ENCODE measurements at regions of chr15 and their contacts with region 1.

Region 1: DNA sequence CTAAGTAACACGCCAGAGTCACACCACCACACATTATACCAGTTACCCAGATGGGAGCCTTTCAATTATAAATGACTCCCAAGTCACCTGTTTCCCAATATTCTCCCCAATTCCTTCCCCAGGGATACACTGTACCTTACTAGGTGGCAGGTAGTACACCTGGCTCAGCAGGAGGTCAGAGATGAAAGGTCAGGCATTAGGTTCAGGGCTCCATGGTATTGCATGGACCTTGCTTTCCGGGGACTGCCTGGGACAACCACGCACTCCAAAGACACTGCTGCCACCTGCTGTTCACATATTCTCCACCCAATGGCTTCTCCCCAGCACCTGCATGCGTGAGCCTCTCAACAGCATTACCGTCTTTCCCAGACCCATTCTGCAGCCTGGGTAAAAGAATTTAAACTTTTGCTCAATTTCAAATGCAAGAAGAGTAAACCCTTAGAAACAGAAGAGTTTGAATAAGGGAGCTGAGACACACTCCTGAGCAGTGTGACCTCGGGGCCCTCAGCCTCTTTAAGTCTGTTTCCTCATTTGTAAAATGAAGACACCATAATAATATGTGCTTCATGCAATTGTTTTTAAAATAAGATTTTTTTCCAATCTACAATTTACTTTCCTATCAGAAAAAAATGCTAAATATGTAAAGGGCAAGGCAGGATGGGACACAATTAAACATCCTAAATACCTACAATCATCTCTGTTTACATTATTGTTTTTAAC is 28.0 kb upstream of the LACTB start:
- DNase-seq: peak; percentile 16 to 88
- H3K4me3 ChIP-seq: no peak overlapping the region
- H3K27ac ChIP-seq: no peak overlapping the region
- H3K4me1 ChIP-seq: peaks cover 0 to 5% of the 10 kb centered on the region in 2 donors
- H3K27me3 ChIP-seq: no peaks in the 10 kb centered on the region
- CTCF ChIP-seq: peak; percentile 83 to 89 (median 86)

Region 2: DNA sequence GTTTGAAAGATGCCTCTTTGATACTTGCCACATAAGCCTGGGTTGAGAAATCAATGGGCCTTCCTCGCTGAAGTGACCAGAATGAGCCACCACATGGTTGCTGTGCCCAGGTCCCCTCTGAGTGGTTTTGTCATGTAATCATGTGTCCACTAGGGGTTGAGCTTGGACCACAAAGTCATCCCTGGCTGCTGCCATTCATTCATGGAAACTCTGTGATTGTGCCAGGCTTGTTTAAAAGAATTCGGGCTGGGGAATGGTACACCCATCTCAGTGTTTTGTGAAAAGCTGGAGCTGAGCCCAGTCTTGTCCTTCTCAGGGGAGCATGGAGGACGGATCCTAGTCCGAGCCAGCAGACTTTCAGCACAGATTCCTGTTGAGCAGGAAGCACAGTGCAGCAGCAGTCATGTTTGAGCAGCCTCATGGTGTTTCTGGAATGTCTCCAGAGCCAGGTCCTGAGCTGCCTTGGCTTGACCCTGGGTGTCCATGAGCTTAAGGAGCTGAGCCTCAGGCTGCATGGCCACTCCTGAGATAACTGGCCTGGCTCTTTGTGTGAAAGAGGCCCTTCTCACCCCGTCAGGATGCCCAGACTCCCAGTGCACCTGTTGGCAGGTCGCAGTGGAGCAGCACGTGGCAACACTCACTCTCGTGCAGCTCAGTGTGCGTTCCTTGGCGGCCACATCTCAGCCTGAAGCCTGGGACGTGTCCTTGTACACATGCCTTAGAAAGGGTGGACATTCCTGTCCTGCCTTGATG is 311.4 kb before region 1 on chr15:
- intact Hi-C with region 1: loop called (anchors 1 kb)
- DNase-seq: peak; percentile 30 to 91
- H3K4me3 ChIP-seq: no peak overlapping the region
- H3K27ac ChIP-seq: peak overlapping the region; percentile 32 to 34
- H3K4me1 ChIP-seq: peaks cover 0 to 9% of the 10 kb centered on the region in 2 donors
- H3K27me3 ChIP-seq: no peaks in the 10 kb centered on the region
- CTCF ChIP-seq: peak; percentile 69 to 71 (median 69)

Measured in ascending aorta (tissue), 2 donors.